ENCODE measurements at regions of chr2 and their contacts with region 1.

Region 1: DNA sequence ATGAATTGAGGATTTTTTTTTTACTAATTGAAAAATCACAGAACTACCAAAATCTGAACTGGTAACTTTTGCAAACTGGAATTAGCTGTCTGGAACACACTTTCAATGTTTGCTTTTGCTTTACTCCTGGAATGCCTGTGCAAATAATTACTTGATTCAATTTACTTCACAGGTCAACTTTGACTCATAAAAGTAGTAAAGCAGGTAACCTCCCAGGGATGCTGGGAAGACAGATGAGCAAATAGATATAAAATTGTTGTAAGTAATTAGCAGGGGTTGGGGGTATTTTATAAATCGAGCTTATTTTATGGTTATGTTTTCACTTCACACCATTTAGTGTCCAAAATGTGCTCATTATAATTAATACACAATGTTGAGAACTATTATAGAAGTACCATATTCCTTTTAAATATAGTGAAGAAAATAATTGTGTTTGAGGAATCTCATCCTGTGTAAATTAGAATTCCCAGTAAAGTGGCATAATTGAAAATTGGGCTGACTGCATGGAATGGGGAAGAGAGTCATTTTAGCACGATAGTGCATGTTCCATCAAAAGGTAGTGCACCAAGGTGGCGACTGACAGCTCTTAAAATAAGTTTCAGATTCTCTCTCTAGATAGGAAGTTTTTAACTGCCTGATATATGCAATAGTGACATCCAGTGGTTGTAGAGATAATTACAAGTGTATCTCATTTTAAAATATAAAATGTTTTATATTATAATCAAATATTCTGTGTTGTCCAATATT is 398.1 kb upstream of the HNRNPA3 start:
- DNase-seq: peak in 5 of 9 donors; percentile 34 to 47 (median 44)
- ATAC-seq: peak; percentile 80
- H3K4me3 ChIP-seq: no peak overlapping the region
- H3K4me3 Mint-ChIP-seq: peak overlapping the region in 7 of 10 donors; percentile 7 to 62 (median 24)
- H3K27ac ChIP-seq: no peak overlapping the region
- H3K27ac Mint-ChIP-seq: no peak overlapping the region
- H3K4me1 ChIP-seq: peaks cover 3 to 7% of the 10 kb centered on the region in 2 donors
- H3K4me1 Mint-ChIP-seq: peaks cover 10 to 26% (median 19%) of the 10 kb centered on the region in 7 donors
- H3K27me3 ChIP-seq: no peaks in the 10 kb centered on the region
- H3K27me3 Mint-ChIP-seq: peaks cover 0 to 7% (median 0%) of the 10 kb centered on the region in 5 donors

Region 2: GRCh38 chr2:176826984-176827668 is 12.6 kb after region 1 on chr2:
- CTCF ChIA-PET with region 1: no interaction called
- POLR2A ChIA-PET with region 1: no interaction called
- intact Hi-C with region 1: loop called in 1 of 2 experiments (anchors 1 kb)
- DNase-seq: peak in 1 of 9 donors; percentile 31
- ATAC-seq: no peak
- H3K4me3 ChIP-seq: peak overlapping the region; percentile 4
- H3K4me3 Mint-ChIP-seq: peak overlapping the region in 9 of 10 donors; percentile 23 to 66 (median 53)
- H3K27ac ChIP-seq: peak overlapping the region; percentile 43
- H3K27ac Mint-ChIP-seq: peak overlapping the region; percentile 64 to 91 (median 87)
- H3K4me1 ChIP-seq: peaks cover 9 to 35% of the 10 kb centered on the region in 2 donors
- H3K4me1 Mint-ChIP-seq: peaks cover 25 to 79% (median 53%) of the 10 kb centered on the region in 7 donors
- H3K27me3 ChIP-seq: no peaks in the 10 kb centered on the region
- H3K27me3 Mint-ChIP-seq: peaks cover 0 to 11% (median 1%) of the 10 kb centered on the region in 5 donors